ENCODE measurements at regions of chr19 and their contacts with region 1.

Region 1: DNA sequence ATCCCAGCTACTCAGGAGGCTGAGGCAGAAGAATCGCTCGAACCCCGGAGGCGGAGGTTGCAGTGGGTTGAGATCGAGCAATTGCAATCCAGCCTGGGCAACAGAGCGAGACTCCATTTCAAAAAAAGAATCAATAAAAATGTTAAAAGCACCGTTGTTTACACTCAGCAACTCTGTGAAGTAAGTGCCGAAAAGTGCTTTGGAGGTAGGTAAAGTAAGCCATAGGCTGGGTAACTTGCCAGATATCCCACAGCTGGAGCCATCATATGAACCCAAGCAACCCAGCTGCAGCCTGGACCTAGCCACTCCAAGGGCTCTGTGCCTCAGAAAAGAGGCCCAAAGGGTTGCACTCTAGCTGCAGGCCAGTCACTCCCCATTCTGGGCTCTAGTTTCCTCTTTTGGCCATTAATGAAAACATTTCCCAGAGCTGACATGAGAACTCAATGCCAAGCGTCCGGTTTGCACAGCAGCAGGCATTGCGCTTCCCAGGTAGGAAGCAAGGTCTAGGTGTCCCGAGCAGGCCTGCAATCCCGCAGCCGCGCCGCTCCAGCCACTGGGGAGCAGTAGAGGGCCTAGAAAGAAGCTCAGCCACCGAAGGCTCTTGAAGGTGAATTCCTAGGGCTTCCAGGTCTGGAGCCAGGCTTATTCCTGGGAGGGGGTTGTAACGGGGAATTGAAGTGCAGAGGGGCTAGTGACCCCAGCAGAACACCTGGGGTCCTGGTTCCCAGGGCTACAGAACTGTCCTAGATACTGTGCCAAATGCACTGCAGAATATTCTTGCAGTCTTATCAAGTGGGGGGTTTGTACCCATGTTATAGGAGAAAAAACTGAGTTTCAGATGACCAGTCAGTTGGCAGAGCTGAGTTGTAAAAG is 4.1 kb upstream of the CD79A start:
- DNase-seq: peak; percentile 71
- H3K4me3 Mint-ChIP-seq: peak overlapping the region; percentile 36
- H3K27ac Mint-ChIP-seq: peak overlapping the region; percentile 99
- H3K4me1 Mint-ChIP-seq: peaks cover 93% of the 10 kb centered on the region
- H3K27me3 Mint-ChIP-seq: no peaks in the 10 kb centered on the region

Region 2: GRCh38 chr19:41859618-41860418 is 13.2 kb before region 1 on chr19 and contains the start of gene RPS19:
- CTCF ChIA-PET with region 1: interaction called, 27 read pairs
- POLR2A ChIA-PET with region 1: interaction called, 11 read pairs
- DNase-seq: peak; percentile 98
- H3K4me3 Mint-ChIP-seq: peak within 1 kb of the TSS; percentile 79
- H3K27ac Mint-ChIP-seq: peak within 1 kb of the TSS; percentile 94
- H3K4me1 Mint-ChIP-seq: peaks cover 44% of the 10 kb centered on the region
- H3K27me3 Mint-ChIP-seq: peaks cover 2% of the 10 kb centered on the region
- total RNA-seq, gene RPS19: 2,679 to 3,011 TPM

Region 3: DNA sequence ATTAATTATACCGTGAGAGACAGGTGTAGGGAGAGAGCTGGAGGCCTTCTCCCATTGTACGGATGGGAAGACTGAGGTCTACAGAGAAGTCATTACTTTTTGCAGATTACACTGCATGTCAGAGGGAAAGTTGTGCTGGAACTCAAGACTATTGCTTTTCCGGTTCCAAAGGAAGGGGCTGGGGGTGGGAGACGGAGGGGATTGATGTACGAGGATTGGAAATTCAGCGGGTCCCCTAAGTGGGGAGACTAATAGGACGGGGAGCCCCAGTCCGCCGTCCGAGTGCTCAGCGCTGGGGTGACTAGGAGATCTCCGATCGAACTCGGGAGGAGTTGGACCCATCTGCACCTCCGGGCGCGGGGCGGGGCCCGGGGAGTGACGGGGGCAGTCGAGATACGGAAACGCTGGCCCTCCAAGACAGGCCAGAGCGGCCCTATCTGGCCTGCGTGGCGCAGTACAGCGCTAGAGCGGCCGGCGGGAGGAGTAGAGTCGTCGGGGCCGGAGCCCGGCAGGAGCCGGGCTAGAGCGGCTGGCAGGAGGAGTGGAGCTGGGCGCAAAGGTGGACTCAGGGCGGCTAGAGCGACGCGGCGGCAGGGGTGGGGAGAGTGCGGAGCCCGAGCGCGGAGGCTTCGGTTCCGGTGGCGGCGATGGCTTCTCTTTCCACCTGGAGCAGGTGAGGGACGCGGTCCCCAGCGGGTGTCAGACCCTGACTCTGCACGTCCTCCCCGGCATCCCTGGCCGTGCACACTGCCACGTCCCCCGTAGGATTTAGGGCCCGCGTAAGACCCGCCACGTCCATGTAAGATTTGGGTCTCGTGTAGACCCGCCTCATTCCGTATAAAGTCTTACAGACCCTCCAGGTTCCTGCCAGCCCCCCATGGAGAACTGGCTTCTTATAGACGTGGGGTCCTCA is 11.1 kb after region 1 on chr19:
- CTCF ChIA-PET with region 1: interaction called, 44 read pairs
- POLR2A ChIA-PET with region 1: interaction called, 8 read pairs
- DNase-seq: peak; percentile 90
- H3K4me3 Mint-ChIP-seq: peak overlapping the region; percentile 83
- H3K27ac Mint-ChIP-seq: peak overlapping the region; percentile 94
- H3K4me1 Mint-ChIP-seq: peaks cover 51% of the 10 kb centered on the region
- H3K27me3 Mint-ChIP-seq: no peaks in the 10 kb centered on the region

Region 4: DNA sequence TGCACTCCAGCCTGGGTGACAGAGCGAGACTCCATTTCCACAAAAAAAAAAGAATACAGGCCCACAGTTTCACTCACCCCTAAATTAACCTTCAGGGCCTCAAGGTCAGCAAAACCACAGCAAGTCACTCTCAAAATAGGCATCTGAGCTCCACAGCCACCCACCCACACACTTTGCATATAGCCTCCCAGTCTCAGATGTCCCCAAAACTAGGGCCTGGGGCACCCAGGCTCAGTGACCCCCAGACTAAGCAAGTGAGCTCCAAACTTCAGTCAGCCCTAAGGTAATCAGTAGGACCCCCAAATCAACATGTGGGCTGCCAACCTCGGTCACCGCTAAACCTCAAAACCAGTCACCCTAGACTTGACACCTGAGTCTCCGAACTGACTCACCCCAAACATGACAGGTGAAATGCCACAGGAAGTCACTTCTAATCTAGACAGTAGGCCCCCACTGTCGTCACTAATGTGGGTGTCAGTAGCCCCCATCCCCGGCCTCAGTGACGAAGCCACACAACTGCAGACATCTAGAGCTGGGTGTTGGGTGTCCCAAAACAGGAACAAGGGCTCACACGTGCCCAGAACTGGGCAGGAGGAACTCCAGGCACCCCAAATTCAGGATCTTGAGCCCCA is 72.2 kb after region 1 on chr19:
- CTCF ChIA-PET with region 1: interaction called, 22 read pairs
- POLR2A ChIA-PET with region 1: no interaction called
- DNase-seq: peak; percentile 79
- H3K4me3 Mint-ChIP-seq: no peak overlapping the region
- H3K27ac Mint-ChIP-seq: peak overlapping the region; percentile 81
- H3K4me1 Mint-ChIP-seq: peaks cover 41% of the 10 kb centered on the region
- H3K27me3 Mint-ChIP-seq: peaks cover 12% of the 10 kb centered on the region

Region 5: DNA sequence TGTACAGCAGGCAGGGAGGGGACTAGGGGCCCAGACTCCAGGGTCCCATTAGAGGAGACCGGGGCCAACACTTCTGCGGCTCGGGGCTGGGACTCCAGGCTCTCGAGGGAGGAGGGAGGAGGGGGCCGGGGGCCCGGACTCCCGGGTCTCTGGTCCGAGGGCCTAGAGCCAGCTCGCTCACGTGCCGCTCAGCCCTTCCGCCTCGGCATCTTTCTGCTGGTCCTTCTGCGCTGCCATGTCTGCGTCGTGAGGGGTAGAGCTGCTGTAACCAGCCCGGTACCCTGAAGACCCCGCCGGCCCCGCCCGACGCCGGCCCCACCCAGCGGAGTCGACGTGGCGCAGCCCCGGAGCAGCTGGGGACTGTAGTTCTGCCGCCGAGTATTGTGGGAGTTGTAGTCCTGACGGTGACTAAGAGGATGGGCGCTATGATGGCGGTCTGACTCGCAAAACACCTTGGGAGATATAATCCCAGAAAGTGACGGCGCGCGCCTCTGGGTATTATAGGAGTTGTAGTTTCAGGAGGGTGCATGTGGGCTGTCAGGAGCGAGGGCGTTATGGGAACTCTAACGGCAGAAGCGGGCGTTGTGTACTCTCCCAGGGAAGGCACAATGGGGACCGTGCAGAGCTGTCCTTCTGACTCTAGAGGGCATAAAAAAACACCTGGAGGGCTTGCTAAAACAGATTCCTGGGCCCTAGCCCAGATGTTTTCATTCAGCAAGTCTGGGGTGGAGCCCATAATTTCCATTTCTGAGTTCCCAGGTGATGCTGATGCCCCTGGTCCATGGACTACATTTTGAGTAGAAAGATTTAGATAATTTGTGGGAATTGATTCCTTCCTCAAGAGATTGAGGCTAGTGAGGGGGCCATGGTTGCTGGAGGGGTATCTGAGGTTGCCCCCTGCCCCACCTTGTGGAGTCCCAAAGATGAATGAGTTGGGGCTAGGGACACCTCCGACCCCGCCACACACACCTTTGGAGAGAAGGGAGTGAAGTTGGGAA is 86.3 kb after region 1 on chr19 and contains the start of gene RABAC1:
- CTCF ChIA-PET with region 1: interaction called, 22 read pairs
- POLR2A ChIA-PET with region 1: no interaction called
- DNase-seq: peak; percentile 93
- H3K4me3 Mint-ChIP-seq: peak within 1 kb of the TSS; percentile 86
- H3K27ac Mint-ChIP-seq: peak within 1 kb of the TSS; percentile 91
- H3K4me1 Mint-ChIP-seq: peaks cover 20% of the 10 kb centered on the region
- H3K27me3 Mint-ChIP-seq: no peaks in the 10 kb centered on the region
- total RNA-seq, gene RABAC1: 67.4 to 74.0 TPM

Region 6: DNA sequence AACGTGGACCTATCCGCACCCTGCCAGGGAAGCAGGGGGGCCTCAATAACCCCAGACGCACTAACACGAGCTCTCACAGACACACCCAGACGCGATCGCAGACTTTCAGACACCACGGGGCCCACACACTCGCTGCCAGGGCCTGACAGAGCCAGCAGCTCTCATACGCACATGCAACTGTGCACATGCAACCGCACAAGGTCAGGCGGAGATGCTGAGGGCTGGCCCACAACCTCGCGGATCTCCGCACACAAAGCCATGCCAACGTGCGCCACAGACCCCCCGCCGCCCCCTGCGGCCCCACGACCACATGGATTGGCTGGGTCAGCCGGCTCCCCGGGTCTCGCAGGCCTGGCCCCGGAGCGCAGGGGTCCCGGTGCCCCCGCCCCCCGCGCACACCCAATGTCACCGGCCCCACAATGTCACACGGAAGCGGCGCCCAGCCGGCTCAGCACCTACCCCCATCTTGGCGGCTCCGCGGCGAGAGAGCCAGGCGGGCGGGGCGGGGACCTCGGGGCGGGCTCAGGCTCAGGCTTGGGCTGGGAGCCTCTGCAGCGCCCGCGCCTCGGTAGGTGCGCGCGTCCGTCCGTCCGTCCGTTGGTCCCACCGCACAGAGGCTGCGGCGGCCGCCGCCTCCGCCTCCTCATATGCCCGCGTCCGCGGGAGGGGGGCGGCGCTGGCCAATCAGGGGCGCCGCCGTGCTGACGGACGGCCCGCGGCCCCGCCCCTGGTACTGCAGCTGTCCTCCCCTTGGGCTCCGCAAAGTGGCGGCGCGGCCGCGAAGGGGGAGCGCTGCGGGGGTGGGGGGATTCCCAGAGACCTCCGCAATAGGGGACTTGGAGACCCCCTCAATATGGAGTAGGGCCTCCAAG is 120.8 kb after region 1 on chr19 and contains the start of gene ATP1A3:
- CTCF ChIA-PET with region 1: no interaction called
- POLR2A ChIA-PET with region 1: no interaction called
- DNase-seq: peak; percentile 63
- H3K4me3 Mint-ChIP-seq: peak within 1 kb of the TSS; percentile 62
- H3K27ac Mint-ChIP-seq: no peak within 1 kb of the TSS
- H3K4me1 Mint-ChIP-seq: peaks cover 32% of the 10 kb centered on the region
- H3K27me3 Mint-ChIP-seq: peaks cover 43% of the 10 kb centered on the region
- total RNA-seq, gene ATP1A3: 1.9 to 2.0 TPM